ENCODE measurements at regions of chr3 and their contacts with region 1.

Region 1: DNA sequence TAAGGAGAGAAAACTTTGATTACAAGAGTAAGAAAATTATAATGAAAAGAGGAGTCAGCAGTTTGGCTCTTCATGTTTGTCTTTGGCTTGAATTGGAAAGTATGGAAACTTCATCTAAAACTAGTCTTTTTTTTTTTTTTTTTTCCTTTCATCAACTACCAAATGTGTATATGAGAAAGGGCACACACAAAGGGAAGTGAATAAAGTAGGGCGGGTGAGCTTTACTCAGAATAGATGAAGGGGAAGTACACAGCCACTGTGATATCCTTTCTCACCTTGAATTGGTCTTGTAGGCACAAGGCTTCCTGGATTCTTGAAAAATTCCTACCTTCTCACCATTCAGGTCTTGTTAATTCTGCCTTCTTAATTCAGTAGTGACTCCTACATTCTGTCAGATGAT is 652.3 kb upstream of the KCNMB2 start:
- DNase-seq: no peak
- ATAC-seq: peak; percentile 80
- H3K4me3 Mint-ChIP-seq: no peak overlapping the region
- H3K27ac Mint-ChIP-seq: no peak overlapping the region
- H3K4me1 Mint-ChIP-seq: peaks cover 20% of the 10 kb centered on the region
- H3K27me3 Mint-ChIP-seq: no peaks in the 10 kb centered on the region

Region 2: GRCh38 chr3:177294221-177294620 is 589.7 kb before region 1 on chr3:
- CTCF ChIA-PET with region 1: no interaction called
- POLR2A ChIA-PET with region 1: no interaction called
- intact Hi-C with region 1: no loop called
- DNase-seq: no peak
- ATAC-seq: no peak
- H3K4me3 Mint-ChIP-seq: no peak overlapping the region
- H3K27ac Mint-ChIP-seq: no peak overlapping the region
- H3K4me1 Mint-ChIP-seq: no peaks in the 10 kb centered on the region
- H3K27me3 Mint-ChIP-seq: no peaks in the 10 kb centered on the region

Region 3: DNA sequence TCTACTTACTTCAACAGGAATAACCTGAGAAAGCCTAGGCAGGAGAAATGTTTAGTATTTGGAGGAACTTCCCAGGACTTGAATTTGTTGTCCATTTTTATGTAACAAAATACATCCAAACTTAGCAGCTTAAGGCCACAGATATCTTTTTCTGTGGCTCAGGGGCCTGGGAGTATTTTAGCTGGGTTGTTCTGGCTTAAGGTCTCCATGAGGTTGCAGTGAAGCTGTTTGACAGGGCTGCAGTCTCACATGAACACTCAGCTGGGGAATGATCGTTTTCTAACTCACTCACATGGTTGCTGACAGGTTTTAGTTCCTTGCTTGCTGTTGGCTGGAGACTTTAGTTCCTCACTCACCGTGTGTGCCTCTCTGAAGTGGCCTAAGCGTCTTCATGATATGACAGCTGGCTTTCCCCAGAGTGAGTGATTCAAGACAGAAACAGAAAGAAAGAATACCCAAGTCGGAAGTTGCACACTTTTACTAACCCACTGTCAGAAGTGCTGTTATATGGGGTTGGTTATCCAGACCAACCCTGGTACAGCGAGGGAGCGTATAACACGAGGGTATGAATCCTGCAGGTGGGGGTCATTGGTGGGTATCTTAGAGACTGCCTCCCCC is 457.0 kb before region 1 on chr3:
- CTCF ChIA-PET with region 1: no interaction called
- POLR2A ChIA-PET with region 1: no interaction called
- intact Hi-C with region 1: no loop called
- DNase-seq: peak; percentile 77
- ATAC-seq: peak; percentile 97
- H3K4me3 Mint-ChIP-seq: peak overlapping the region; percentile 47
- H3K27ac Mint-ChIP-seq: peak overlapping the region; percentile 92
- H3K4me1 Mint-ChIP-seq: peaks cover 32% of the 10 kb centered on the region
- H3K27me3 Mint-ChIP-seq: peaks cover 3% of the 10 kb centered on the region

Region 4: GRCh38 chr3:177787279-177788041 is 96.5 kb before region 1 on chr3:
- CTCF ChIA-PET with region 1: no interaction called
- POLR2A ChIA-PET with region 1: no interaction called
- intact Hi-C with region 1: loop called in 1 of 2 experiments (anchors 5 kb)
- DNase-seq: peak; percentile 32
- ATAC-seq: peak; percentile 89
- H3K4me3 Mint-ChIP-seq: no peak overlapping the region
- H3K27ac Mint-ChIP-seq: peak overlapping the region; percentile 52
- H3K4me1 Mint-ChIP-seq: peaks cover 26% of the 10 kb centered on the region
- H3K27me3 Mint-ChIP-seq: no peaks in the 10 kb centered on the region

Region 5: DNA sequence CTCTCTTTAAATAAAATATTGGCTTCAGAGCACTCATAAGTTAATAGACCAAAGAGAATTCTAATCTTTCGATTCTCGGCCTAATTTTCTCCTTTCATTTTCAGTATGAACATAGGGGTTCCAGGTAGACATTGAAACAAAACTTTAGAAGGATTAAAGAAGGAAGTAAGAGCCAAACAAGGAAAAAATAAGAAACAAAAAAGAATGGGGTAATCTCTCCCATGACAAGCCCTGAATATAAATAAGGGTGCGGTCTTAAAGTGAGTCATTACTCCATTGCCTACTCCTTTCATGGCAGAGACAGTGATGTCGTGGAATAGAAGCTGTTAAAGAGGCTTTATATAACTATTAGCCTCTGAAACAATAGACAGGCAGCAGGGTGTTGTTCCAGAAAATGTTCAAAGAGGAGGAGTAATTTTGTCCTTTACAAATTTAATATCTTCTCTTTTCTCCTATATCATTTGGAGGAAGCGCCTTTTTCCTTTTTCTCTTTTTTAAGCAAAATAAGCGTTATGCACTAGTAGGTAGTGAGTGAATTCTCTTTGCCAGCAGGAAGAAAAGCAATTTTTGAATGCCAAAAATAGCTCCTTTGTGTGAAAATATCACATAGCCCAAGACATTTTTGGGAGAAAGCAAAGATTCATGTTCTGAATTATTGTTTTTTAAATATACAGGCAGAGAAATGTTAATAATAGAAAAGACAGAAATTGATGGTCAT is 44.4 kb after region 1 on chr3:
- CTCF ChIA-PET with region 1: no interaction called
- POLR2A ChIA-PET with region 1: no interaction called
- intact Hi-C with region 1: loop called in 1 of 2 experiments (anchors 5 kb)
- DNase-seq: no peak
- ATAC-seq: peak; percentile 79
- H3K4me3 Mint-ChIP-seq: no peak overlapping the region
- H3K27ac Mint-ChIP-seq: no peak overlapping the region
- H3K4me1 Mint-ChIP-seq: peaks cover 18% of the 10 kb centered on the region
- H3K27me3 Mint-ChIP-seq: no peaks in the 10 kb centered on the region

Region 6: GRCh38 chr3:177994976-177995375 is 111.0 kb after region 1 on chr3:
- CTCF ChIA-PET with region 1: no interaction called
- POLR2A ChIA-PET with region 1: no interaction called
- intact Hi-C with region 1: loop called (anchors 5 kb)
- DNase-seq: no peak
- ATAC-seq: peak; percentile 47
- H3K4me3 Mint-ChIP-seq: no peak overlapping the region
- H3K27ac Mint-ChIP-seq: peak overlapping the region; percentile 80
- H3K4me1 Mint-ChIP-seq: peaks cover 28% of the 10 kb centered on the region
- H3K27me3 Mint-ChIP-seq: no peaks in the 10 kb centered on the region